Activated CD4-positive, alpha-beta T cell treated with anti-CD3 and anti-CD28 coated beads, Interleukin-2, amount 10 ng/mL, durations not matched to agents 7 days and 5 days (primary cell): ENCODE measurements at regions of chr1 and their contacts with region 1.

Region 1: DNA sequence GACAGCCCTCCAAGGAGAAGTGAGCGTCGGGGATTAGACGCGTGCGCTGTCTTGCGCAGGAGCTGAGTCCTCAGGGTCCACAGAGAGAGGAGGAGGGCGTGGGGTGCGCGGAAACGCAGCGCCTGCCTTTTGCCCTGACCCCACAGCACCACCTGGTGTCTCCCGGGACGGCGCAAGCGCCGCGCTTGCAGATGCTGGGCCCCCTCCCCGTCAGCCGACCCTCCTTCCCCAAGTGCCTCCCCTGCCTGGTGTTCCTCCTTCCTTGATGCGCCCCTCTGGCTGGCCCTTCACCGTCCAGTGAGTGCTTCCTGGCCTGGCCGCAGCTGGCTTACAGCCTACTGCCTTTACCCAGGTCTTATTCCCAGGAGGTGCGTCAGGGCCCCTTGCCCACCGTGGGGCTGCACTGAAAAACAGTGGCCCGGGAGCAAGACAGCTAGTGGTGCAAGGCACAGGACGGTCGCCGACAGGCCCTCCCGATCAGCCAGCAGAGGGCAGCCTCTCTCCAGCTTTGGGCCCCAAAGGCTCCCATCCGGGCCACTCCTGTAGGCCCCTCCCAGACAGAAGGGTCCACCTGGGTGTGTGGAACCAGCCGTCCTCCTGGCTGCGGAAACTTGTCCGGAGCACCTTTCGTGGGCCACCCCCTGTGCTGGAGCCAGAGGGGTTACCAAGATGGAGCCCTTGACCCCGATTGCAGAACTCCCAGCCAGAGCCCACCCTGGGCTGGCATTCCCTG is 12.9 kb upstream of the PHLDA3 start:
- DNase-seq: peak; percentile 86
- H3K4me3 Mint-ChIP-seq: peak overlapping the region; percentile 72
- H3K27ac Mint-ChIP-seq: no peak overlapping the region
- H3K4me1 Mint-ChIP-seq: peaks cover 30% of the 10 kb centered on the region
- H3K27me3 Mint-ChIP-seq: peaks cover 20% of the 10 kb centered on the region

Region 2: GRCh38 chr1:201447911-201448871 is 33.7 kb before region 1 on chr1:
- CTCF ChIA-PET with region 1: interaction called, 22 read pairs
- POLR2A ChIA-PET with region 1: no interaction called
- DNase-seq: peak; percentile 72
- H3K4me3 Mint-ChIP-seq: no peak overlapping the region
- H3K27ac Mint-ChIP-seq: no peak overlapping the region
- H3K4me1 Mint-ChIP-seq: peaks cover 32% of the 10 kb centered on the region
- H3K27me3 Mint-ChIP-seq: peaks cover 19% of the 10 kb centered on the region

Region 3: DNA sequence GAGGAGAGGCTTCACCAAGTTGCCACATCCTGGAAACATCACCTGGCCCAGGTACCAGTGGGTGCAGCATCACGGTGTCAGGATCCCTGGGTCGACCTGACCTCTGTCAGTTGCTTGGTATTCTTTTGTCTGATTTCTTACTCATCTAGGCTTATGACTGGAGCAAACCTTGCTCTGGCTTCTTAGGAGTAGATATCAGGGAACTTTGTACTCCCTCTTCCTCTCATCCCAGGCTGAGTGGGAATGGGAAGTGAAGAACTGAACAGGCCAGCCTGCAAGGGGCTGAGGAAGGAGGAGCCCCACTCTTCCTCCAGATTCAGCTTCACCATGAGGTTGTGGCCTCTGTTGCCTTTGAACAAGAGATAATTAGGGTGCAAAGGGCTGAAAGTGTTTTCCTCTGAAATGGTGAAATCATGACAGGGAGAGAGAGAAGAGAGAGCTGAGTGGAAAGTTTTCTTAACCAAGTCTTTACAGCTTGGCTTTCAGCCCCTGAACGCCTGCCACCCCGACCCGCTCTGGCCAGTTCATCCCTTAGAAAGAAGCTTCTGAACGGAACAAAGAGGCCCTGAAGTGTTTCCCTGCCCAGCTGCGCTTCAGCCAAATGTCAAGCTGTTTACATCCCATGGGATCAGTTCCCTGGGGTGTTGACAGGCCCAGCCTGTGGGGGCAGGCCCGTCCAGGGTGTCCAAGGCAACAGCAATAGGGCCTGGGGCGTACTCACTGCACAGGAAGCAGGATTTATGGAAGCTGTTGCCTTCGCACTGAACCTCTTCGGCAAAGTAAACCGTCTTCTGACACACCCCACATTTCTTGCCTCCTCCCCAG is 13.8 kb after region 1 on chr1:
- CTCF ChIA-PET with region 1: interaction called, 51 read pairs
- POLR2A ChIA-PET with region 1: no interaction called
- DNase-seq: no peak
- H3K4me3 Mint-ChIP-seq: no peak overlapping the region
- H3K27ac Mint-ChIP-seq: no peak overlapping the region
- H3K4me1 Mint-ChIP-seq: peaks cover 5% of the 10 kb centered on the region
- H3K27me3 Mint-ChIP-seq: no peaks in the 10 kb centered on the region

Region 4: GRCh38 chr1:201506556-201507359 is 24.8 kb after region 1 on chr1 and contains the start of gene CSRP1:
- CTCF ChIA-PET with region 1: interaction called, 156 read pairs
- POLR2A ChIA-PET with region 1: no interaction called
- DNase-seq: peak; percentile 88
- H3K4me3 Mint-ChIP-seq: peak within 1 kb of the TSS; percentile 96
- H3K27ac Mint-ChIP-seq: peak within 1 kb of the TSS; percentile 95
- H3K4me1 Mint-ChIP-seq: peaks cover 56% of the 10 kb centered on the region
- H3K27me3 Mint-ChIP-seq: no peaks in the 10 kb centered on the region
- total RNA-seq, gene CSRP1: 82.4 to 83.4 TPM